ENCODE measurements at regions of chr11 and their contacts with region 1.

Region 1: GRCh38 chr11:10455637-10456487 is 798 bp downstream of the AMPD3 start:
- DNase-seq: peak; percentile 77 to 89 (median 80)
- H3K4me3 ChIP-seq: peak overlapping the region; percentile 63 to 78 (median 64)
- H3K4me3 Mint-ChIP-seq: peak overlapping the region; percentile 91 to 97
- H3K27ac ChIP-seq: peak overlapping the region; percentile 75 to 97
- H3K27ac Mint-ChIP-seq: peak overlapping the region; percentile 86 to 96 (median 89)
- H3K4me1 ChIP-seq: peaks cover 76 to 81% of the 10 kb centered on the region in 2 donors
- H3K4me1 Mint-ChIP-seq: peaks cover 79% of the 10 kb centered on the region
- H3K27me3 ChIP-seq: no peaks in the 10 kb centered on the region
- H3K27me3 Mint-ChIP-seq: no peaks in the 10 kb centered on the region
- CTCF ChIP-seq: no peak

Region 2: GRCh38 chr11:10413268-10413667 is 42.6 kb before region 1 on chr11:
- intact Hi-C with region 1: loop called (anchors 5 kb)
- DNase-seq: peak; percentile 44 to 74 (median 56)
- H3K4me3 ChIP-seq: no peak overlapping the region
- H3K4me3 Mint-ChIP-seq: no peak overlapping the region
- H3K27ac ChIP-seq: peak overlapping the region in 1 of 2 donors; percentile 69
- H3K27ac Mint-ChIP-seq: no peak overlapping the region
- H3K4me1 ChIP-seq: peaks cover 41 to 43% of the 10 kb centered on the region in 2 donors
- H3K4me1 Mint-ChIP-seq: peaks cover 55% of the 10 kb centered on the region
- H3K27me3 ChIP-seq: no peaks in the 10 kb centered on the region
- H3K27me3 Mint-ChIP-seq: peaks cover 0 to 4% (median 2%) of the 10 kb centered on the region in 3 donors
- CTCF ChIP-seq: no peak

Region 3: DNA sequence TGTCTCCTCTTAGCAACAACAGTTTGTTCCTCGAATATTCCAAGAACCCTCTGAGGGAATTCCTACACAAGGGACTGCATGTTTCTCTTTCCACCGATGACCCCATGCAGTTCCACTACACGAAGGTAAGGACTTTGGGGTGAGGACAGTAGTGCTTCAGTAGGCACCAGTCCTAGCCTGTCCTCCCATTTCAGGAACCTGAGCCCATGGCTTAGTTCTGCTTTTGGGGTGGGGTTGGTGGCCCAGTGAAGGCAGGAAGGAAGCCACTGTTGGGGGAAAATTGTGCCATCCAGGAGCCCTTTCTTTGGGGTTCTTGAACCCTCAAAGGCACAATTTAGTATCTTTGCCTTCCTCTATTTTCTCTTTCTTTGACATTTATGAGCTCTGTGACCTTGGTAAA is 46.9 kb after region 1 on chr11:
- intact Hi-C with region 1: loop called in 1 of 2 experiments (anchors 5 kb)
- DNase-seq: peak; percentile 78 to 86 (median 82)
- H3K4me3 ChIP-seq: peak overlapping the region in 1 of 3 experiments; percentile 50
- H3K4me3 Mint-ChIP-seq: peak overlapping the region in 1 of 2 donors; percentile 76
- H3K27ac ChIP-seq: peak overlapping the region; percentile 84 to 97
- H3K27ac Mint-ChIP-seq: peak overlapping the region; percentile 96 to 98 (median 97)
- H3K4me1 ChIP-seq: peaks cover 59 to 66% of the 10 kb centered on the region in 2 donors
- H3K4me1 Mint-ChIP-seq: peaks cover 50% of the 10 kb centered on the region
- H3K27me3 ChIP-seq: no peaks in the 10 kb centered on the region
- H3K27me3 Mint-ChIP-seq: peaks cover 0 to 3% (median 0%) of the 10 kb centered on the region in 3 donors
- CTCF ChIP-seq: no peak

Region 4: GRCh38 chr11:10561043-10561818 is 105.4 kb after region 1 on chr11:
- intact Hi-C with region 1: no loop called
- DNase-seq: no peak
- H3K4me3 ChIP-seq: no peak overlapping the region
- H3K4me3 Mint-ChIP-seq: no peak overlapping the region
- H3K27ac ChIP-seq: no peak overlapping the region
- H3K27ac Mint-ChIP-seq: no peak overlapping the region
- H3K4me1 ChIP-seq: peaks cover 14 to 16% of the 10 kb centered on the region in 2 donors
- H3K4me1 Mint-ChIP-seq: peaks cover 28% of the 10 kb centered on the region
- H3K27me3 ChIP-seq: no peaks in the 10 kb centered on the region
- H3K27me3 Mint-ChIP-seq: peaks cover 0 to 4% (median 2%) of the 10 kb centered on the region in 3 donors
- CTCF ChIP-seq: no peak